Dorsolateral prefrontal cortex (tissue), 120 donors: ENCODE measurements at regions of chr17 and their contacts with region 1.

Region 1: DNA sequence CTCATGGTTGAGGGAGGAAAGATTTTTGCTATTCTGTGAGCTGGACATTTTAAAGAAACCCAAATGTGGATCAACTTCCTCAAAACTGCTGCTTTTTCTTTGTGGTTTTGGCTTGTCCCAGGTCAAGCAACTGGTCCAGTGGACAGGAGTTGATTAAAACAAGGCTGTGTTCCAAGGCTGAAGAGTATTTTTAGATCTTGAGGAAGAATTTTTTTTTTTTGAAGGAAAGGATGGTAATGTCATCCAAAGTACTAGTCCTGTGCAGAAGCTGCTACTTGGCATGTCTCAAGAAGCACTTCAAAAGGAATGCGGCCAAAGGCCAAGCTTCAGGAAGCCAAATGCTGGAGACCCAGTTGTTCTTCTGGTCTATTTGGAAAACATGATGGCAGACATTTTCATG is 8.0 kb upstream of the MYH2 start:
- DNase-seq: no peak
- H3K4me3 ChIP-seq: no peak overlapping the region
- H3K27ac ChIP-seq: no peak overlapping the region
- H3K27me3 ChIP-seq: peaks cover 0 to 5% (median 0%) of the 10 kb centered on the region in 45 donors
- CTCF ChIP-seq: no peak

Region 2: GRCh38 chr17:10600571-10600970 is 43.1 kb after region 1 on chr17:
- intact Hi-C with region 1: loop called in 1 of 2 experiments (anchors 10 kb)
- DNase-seq: no peak
- H3K4me3 ChIP-seq: no peak overlapping the region
- H3K27ac ChIP-seq: no peak overlapping the region
- H3K27me3 ChIP-seq: peaks cover 0 to 14% (median 0%) of the 10 kb centered on the region in 45 donors
- CTCF ChIP-seq: no peak

Region 3: DNA sequence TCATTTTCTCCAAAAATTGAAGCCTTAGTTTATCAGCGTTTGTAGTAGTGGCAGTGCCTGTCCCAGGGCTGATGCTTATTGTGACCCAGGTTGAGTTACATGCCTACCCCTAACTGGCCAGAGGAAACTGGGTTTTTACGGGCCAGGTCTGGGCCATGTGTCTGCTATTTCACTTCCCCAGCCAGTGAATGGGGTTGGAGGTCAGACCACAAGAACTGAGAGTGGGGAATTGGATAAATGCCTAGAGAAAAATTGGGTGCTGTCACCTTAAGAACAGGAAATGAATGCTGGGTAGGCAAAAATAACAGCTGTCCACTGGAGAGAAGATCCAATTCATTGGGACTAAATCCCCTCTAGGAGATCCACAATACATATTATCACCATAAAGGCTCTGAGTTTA is 145.2 kb after region 1 on chr17:
- intact Hi-C with region 1: no loop called
- DNase-seq: no peak
- H3K4me3 ChIP-seq: no peak overlapping the region
- H3K27ac ChIP-seq: no peak overlapping the region
- H3K27me3 ChIP-seq: no peaks in the 10 kb centered on the region
- CTCF ChIP-seq: no peak